CD8-positive, alpha-beta T cell (primary cell): ENCODE measurements at regions of chr21 and their contacts with region 1.

Region 1: GRCh38 chr21:46018615-46019014 is 37.0 kb downstream of the COL6A1 start:
- DNase-seq: no peak
- ATAC-seq: no peak
- H3K4me3 ChIP-seq: no peak overlapping the region
- H3K4me3 Mint-ChIP-seq: no peak overlapping the region
- H3K27ac ChIP-seq: no peak overlapping the region
- H3K27ac Mint-ChIP-seq: no peak overlapping the region
- H3K4me1 ChIP-seq: no peaks in the 10 kb centered on the region
- H3K4me1 Mint-ChIP-seq: no peaks in the 10 kb centered on the region
- H3K27me3 ChIP-seq: peaks cover 0 to 7% of the 10 kb centered on the region in 2 experiments
- H3K27me3 Mint-ChIP-seq: peaks cover 45% of the 10 kb centered on the region
- CTCF ChIP-seq: no peak

Region 2: GRCh38 chr21:45949928-45950733 is 68.5 kb before region 1 on chr21:
- CTCF ChIA-PET with region 1: no interaction called
- POLR2A ChIA-PET with region 1: no interaction called
- intact Hi-C with region 1: loop called in 1 of 2 experiments (anchors 5 kb)
- DNase-seq: no peak
- ATAC-seq: no peak
- H3K4me3 ChIP-seq: no peak overlapping the region
- H3K4me3 Mint-ChIP-seq: no peak overlapping the region
- H3K27ac ChIP-seq: no peak overlapping the region
- H3K27ac Mint-ChIP-seq: no peak overlapping the region
- H3K4me1 ChIP-seq: no peaks in the 10 kb centered on the region
- H3K4me1 Mint-ChIP-seq: no peaks in the 10 kb centered on the region
- H3K27me3 ChIP-seq: no peaks in the 10 kb centered on the region
- H3K27me3 Mint-ChIP-seq: peaks cover 4% of the 10 kb centered on the region
- CTCF ChIP-seq: no peak

Region 3: DNA sequence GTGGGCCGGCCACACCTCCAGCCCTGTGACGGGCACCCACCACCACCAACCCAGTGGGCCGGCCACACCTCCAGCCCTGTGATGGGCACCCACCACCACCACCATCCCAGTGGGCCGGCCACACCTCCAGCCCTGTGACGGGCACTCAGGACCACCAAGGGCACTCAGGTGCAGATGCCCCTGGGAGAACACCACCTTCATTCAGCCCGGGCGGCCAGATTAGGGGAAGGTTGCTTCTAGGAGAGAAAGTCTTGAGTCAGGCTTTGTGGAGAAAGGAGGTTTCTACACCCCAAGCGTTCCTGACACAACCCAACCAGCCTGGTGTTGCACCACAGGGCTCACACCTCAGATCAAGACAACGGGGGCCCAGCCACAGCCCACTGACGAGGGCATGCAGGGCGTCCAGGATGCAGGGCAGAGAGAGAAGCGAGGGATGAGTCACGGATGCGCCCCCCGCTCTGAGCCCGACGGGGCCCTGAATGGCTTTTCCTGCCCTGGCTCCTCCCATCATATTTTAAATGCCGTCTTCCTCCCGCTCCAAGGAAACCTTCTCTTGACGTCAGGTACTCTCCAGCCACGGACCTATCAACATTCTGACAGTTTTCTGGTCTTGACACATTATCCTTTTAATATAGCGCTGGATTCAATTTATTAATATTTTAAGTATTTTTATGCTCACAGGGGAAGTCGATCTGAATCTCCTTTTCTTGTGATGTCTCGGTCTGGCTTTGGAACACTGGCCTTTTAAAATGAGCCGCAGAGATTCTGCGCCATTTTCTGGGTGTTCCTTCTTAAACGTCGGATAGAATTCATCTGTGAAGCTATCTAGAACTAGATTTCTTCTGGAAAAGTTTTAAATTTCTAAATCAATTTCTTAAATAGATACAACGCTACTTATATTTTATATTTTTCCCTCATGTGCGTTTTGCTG is 166.3 kb after region 1 on chr21:
- CTCF ChIA-PET with region 1: no interaction called
- POLR2A ChIA-PET with region 1: no interaction called
- intact Hi-C with region 1: no loop called
- DNase-seq: peak; percentile 39 to 94 (median 77)
- ATAC-seq: peak; percentile 86
- H3K4me3 ChIP-seq: peak overlapping the region; percentile 64 to 79
- H3K4me3 Mint-ChIP-seq: peak overlapping the region; percentile 86
- H3K27ac ChIP-seq: peak overlapping the region; percentile 67 to 83
- H3K27ac Mint-ChIP-seq: peak overlapping the region; percentile 91
- H3K4me1 ChIP-seq: peaks cover 9% of the 10 kb centered on the region
- H3K4me1 Mint-ChIP-seq: peaks cover 15% of the 10 kb centered on the region
- H3K27me3 ChIP-seq: no peaks in the 10 kb centered on the region
- H3K27me3 Mint-ChIP-seq: no peaks in the 10 kb centered on the region
- CTCF ChIP-seq: no peak